ENCODE measurements at regions of chr2 and their contacts with region 1.

Region 1: GRCh38 chr2:237691908-237692600 is 64.7 kb downstream of the LRRFIP1 start:
- DNase-seq: peak; percentile 86
- ATAC-seq: peak; percentile 59
- H3K4me3 ChIP-seq: peak overlapping the region; percentile 94
- H3K27ac ChIP-seq: peak overlapping the region; percentile 91
- H3K4me1 ChIP-seq: peaks cover 68% of the 10 kb centered on the region
- H3K27me3 ChIP-seq: no peaks in the 10 kb centered on the region
- CTCF ChIP-seq: no peak

Region 2: GRCh38 chr2:236472720-236473495 is 1219.1 kb before region 1 on chr2:
- CTCF ChIA-PET with region 1: no interaction called
- POLR2A ChIA-PET with region 1: no interaction called
- intact Hi-C with region 1: no loop called
- DNase-seq: no peak
- ATAC-seq: no peak
- H3K4me3 ChIP-seq: no peak overlapping the region
- H3K27ac ChIP-seq: no peak overlapping the region
- H3K4me1 ChIP-seq: no peaks in the 10 kb centered on the region
- H3K27me3 ChIP-seq: peaks cover 11% of the 10 kb centered on the region
- CTCF ChIP-seq: no peak

Region 3: DNA sequence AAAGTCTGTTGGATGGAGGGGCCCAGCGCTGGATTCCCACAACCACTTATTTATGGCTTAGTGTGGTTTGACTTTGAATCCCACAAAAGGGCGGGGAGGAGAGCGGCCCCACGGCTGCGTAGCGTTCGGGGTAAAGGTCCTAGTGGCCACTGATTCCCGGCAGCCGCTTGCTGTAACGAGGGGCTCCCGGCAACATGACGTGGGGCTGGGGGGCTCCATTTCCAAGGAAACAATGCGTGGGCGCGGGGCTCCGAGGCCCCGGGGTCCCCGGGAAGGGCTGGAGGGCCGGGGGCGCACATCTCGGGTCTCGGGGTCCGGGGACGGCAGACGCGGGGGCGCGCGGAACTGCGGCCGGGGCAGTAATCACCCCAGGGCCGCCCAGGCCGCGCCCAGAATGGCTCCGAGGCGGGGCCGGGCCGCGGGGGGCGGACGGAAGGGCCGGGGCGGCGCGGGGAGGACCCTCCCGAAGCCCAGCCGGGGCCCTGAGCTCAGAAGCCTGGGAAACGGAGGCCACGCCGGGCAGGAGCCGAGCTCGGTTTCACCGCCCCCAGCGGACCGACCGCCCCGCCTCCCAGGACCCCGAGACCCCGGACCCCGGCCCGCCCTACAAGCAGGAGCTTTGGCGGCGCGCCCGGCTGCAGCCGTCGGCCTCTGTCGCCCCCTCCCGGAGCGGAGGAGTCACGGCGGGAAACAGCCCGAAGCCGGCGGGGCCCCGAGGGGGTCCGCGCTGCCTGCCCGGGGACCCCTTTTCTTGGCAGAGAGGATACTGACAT is 216.9 kb before region 1 on chr2:
- CTCF ChIA-PET with region 1: no interaction called
- POLR2A ChIA-PET with region 1: no interaction called
- intact Hi-C with region 1: no loop called
- DNase-seq: peak; percentile 66
- ATAC-seq: peak; percentile 66
- H3K4me3 ChIP-seq: peak overlapping the region; percentile 70
- H3K27ac ChIP-seq: peak overlapping the region; percentile 96
- H3K4me1 ChIP-seq: peaks cover 27% of the 10 kb centered on the region
- H3K27me3 ChIP-seq: no peaks in the 10 kb centered on the region
- CTCF ChIP-seq: peak; percentile 86

Region 4: DNA sequence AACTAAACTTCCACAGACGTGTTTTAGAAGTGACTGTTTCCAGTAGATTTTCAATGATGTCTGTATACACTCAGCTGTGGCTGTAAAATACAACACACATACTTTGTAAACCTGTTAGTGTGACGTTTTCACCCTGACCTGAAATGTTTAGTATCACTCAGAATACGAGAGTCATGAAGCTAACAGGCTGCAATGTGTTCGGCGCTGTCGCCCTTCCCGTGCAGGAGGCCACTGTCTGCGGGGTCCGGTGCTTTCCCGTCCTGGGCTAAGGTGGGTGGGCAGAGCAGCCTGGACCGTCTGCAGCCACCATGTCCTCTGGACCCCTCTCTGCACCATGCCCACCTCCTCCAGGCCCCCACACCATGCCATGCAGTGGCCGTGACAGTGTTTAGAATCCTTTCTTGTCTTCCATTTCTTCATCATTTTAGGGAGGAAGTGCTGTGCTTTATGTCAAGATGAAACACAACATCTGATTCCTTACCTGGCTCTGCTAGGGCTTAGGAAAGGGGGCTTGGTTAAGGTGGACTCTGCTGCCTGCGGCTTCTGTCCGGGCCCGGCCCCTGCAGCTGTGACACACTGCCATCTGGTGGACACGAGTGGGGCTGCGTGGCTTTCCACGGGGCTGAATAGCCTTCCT is 52.7 kb after region 1 on chr2:
- CTCF ChIA-PET with region 1: interaction called, 9 read pairs
- POLR2A ChIA-PET with region 1: interaction called, 5 read pairs
- intact Hi-C with region 1: loop called (anchors 2 kb)
- DNase-seq: peak; percentile 75
- ATAC-seq: peak; percentile 83
- H3K4me3 ChIP-seq: no peak overlapping the region
- H3K27ac ChIP-seq: no peak overlapping the region; the same call in 1 of the 2 replicates
- H3K4me1 ChIP-seq: peaks cover 31% of the 10 kb centered on the region
- H3K27me3 ChIP-seq: no peaks in the 10 kb centered on the region
- CTCF ChIP-seq: peak; percentile 95